Thyroid gland (tissue), 4 donors: ENCODE measurements at regions of chr4 and their contacts with region 1.

Region 1: GRCh38 chr4:87150498-87151261 is 69.7 kb downstream of the KLHL8 start:
- DNase-seq: peak; percentile 37 to 39
- H3K4me3 ChIP-seq: no peak overlapping the region
- H3K27ac ChIP-seq: peak overlapping the region in 2 of 3 donors; percentile 8 to 41
- H3K4me1 ChIP-seq: peaks cover 6 to 12% of the 10 kb centered on the region in 2 donors
- H3K27me3 ChIP-seq: no peaks in the 10 kb centered on the region
- CTCF ChIP-seq: peak; percentile 69 to 93 (median 90)
- POLR2A ChIP-seq: no peak

Region 2: GRCh38 chr4:87108142-87108546 is 42.5 kb before region 1 on chr4:
- intact Hi-C with region 1: no loop called
- DNase-seq: peak; percentile 69 to 76
- H3K4me3 ChIP-seq: no peak overlapping the region
- H3K27ac ChIP-seq: peak overlapping the region; percentile 81 to 86 (median 82)
- H3K4me1 ChIP-seq: peaks cover 45 to 66% of the 10 kb centered on the region in 2 donors
- H3K27me3 ChIP-seq: no peaks in the 10 kb centered on the region
- CTCF ChIP-seq: peak in 1 of 6 experiments; percentile 4
- POLR2A ChIP-seq: peak in 1 of 2 donors; percentile 65

Region 3: GRCh38 chr4:87235020-87235671 is 84.5 kb after region 1 on chr4:
- intact Hi-C with region 1: loop called (anchors 5 kb)
- DNase-seq: no peak
- H3K4me3 ChIP-seq: peak overlapping the region in 1 of 3 donors; percentile 26
- H3K27ac ChIP-seq: no peak overlapping the region
- H3K4me1 ChIP-seq: peaks cover 5 to 20% of the 10 kb centered on the region in 2 donors
- H3K27me3 ChIP-seq: no peaks in the 10 kb centered on the region
- CTCF ChIP-seq: no peak
- POLR2A ChIP-seq: no peak